Aorta (tissue), 5 donors: ENCODE measurements at regions of chr6 and their contacts with region 1.

Region 1: GRCh38 chr6:126015863-126016262 is 29.5 kb downstream of the TRMT11 start:
- DNase-seq: no peak
- ATAC-seq: no peak
- H3K4me3 ChIP-seq: no peak overlapping the region
- H3K27ac ChIP-seq: no peak overlapping the region
- H3K4me1 ChIP-seq: no peaks in the 10 kb centered on the region
- H3K27me3 ChIP-seq: no peaks in the 10 kb centered on the region

Region 2: DNA sequence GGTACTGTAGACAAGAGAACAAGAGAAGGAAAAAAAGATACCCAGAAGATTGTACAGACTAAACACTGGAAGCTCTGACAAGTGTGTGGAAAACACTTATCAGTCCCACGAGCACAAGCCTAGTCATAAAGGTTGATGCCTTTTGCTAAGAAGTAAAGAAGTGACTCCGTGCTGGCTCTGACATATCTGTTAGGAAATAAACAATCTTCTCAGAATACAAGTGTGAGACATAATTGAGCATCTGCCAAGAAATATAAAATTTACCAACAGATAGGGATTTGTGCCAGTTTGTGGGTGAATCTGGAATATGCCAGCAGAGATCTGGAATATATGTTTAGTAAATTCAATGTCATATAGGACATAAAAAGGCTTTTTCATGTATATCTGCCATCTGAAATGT is 1312.3 kb before region 1 on chr6:
- intact Hi-C with region 1: no loop called
- DNase-seq: no peak
- ATAC-seq: no peak
- H3K4me3 ChIP-seq: no peak overlapping the region
- H3K27ac ChIP-seq: no peak overlapping the region
- H3K4me1 ChIP-seq: no peaks in the 10 kb centered on the region
- H3K27me3 ChIP-seq: no peaks in the 10 kb centered on the region

Region 3: GRCh38 chr6:125906158-125906998 is 109.5 kb before region 1 on chr6:
- intact Hi-C with region 1: no loop called
- DNase-seq: peak in 1 of 2 donors; percentile 57
- ATAC-seq: no peak
- H3K4me3 ChIP-seq: no peak overlapping the region
- H3K27ac ChIP-seq: no peak overlapping the region
- H3K4me1 ChIP-seq: no peaks in the 10 kb centered on the region
- H3K27me3 ChIP-seq: no peaks in the 10 kb centered on the region

Region 4: GRCh38 chr6:126570507-126570906 is 554.6 kb after region 1 on chr6:
- intact Hi-C with region 1: no loop called
- DNase-seq: no peak
- ATAC-seq: no peak
- H3K4me3 ChIP-seq: no peak overlapping the region
- H3K27ac ChIP-seq: no peak overlapping the region
- H3K4me1 ChIP-seq: no peaks in the 10 kb centered on the region
- H3K27me3 ChIP-seq: no peaks in the 10 kb centered on the region

Region 5: DNA sequence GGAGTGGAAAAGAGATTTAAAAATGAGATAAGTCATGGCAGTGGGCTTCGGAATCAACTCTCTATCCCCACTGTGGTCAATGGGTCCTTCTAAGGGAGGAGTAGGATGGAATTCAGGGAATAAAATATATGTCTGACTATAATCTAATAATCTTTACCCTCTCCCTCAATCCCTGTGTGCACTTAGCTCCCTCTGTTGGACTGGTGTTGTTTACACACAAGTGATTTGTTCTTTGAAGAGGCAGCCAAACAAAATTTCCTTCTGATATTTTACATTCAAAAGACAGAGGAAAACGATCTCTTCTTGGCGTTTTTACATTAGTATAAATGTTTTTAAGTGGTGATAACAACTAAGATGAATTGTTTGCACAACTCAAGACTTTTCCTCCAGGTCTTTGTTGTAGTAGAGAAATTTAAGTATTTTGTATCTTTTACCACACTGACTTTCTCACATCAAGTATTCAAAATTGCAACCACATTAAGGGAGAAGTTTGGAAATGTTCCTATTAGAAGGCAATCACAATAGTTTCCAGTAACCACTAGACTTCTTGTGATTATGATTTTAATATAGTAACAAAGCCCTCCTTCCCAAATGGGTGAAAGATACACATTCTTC is 641.8 kb after region 1 on chr6:
- intact Hi-C with region 1: loop called in 1 of 2 experiments (anchors 10 kb)
- DNase-seq: no peak
- ATAC-seq: no peak
- H3K4me3 ChIP-seq: no peak overlapping the region
- H3K27ac ChIP-seq: no peak overlapping the region
- H3K4me1 ChIP-seq: no peaks in the 10 kb centered on the region
- H3K27me3 ChIP-seq: no peaks in the 10 kb centered on the region